IMR-90 (cell line): ENCODE measurements at regions of chr9 and their contacts with region 1.

Region 1: GRCh38 chr9:130042833-130043653 is at the start of gene FNBP1:
- DNase-seq: peak; percentile 75
- ATAC-seq: peak; percentile 91
- H3K4me3 ChIP-seq: peak within 1 kb of the TSS; percentile 68
- H3K27ac ChIP-seq: peak within 1 kb of the TSS; percentile 83
- H3K4me1 ChIP-seq: no peaks in the 10 kb centered on the region
- H3K27me3 ChIP-seq: no peaks in the 10 kb centered on the region
- CTCF ChIP-seq: no peak
- POLR2A ChIP-seq: peak; percentile 65; the same call in 1 of the 2 replicates
- RAD21 ChIP-seq: no peak
- total RNA-seq, gene FNBP1: 15.4 and 21.4 TPM in 2 replicates

Region 2: GRCh38 chr9:129835021-129835871 is 207.8 kb before region 1 on chr9 and contains the starts of genes C9orf78 and USP20:
- CTCF ChIA-PET with region 1: no interaction called
- POLR2A ChIA-PET with region 1: no interaction called
- dilution Hi-C with region 1: no loop called
- in situ Hi-C with region 1: no loop called
- intact Hi-C with region 1: loop called (anchors 2 kb)
- DNase-seq: peak; percentile 91
- ATAC-seq: peak; percentile 96
- H3K4me3 ChIP-seq: peak within 1 kb of the TSS; percentile 94
- H3K27ac ChIP-seq: peak within 1 kb of the TSS; percentile 79
- H3K4me1 ChIP-seq: peaks cover 13% of the 10 kb centered on the region
- H3K27me3 ChIP-seq: no peaks in the 10 kb centered on the region
- CTCF ChIP-seq: no peak
- POLR2A ChIP-seq: peak; percentile 95
- RAD21 ChIP-seq: no peak
- total RNA-seq, gene C9orf78: 29.8 and 57.5 TPM in 2 replicates
- total RNA-seq, gene USP20: 3.8 and 4.4 TPM in 2 replicates

Region 3: DNA sequence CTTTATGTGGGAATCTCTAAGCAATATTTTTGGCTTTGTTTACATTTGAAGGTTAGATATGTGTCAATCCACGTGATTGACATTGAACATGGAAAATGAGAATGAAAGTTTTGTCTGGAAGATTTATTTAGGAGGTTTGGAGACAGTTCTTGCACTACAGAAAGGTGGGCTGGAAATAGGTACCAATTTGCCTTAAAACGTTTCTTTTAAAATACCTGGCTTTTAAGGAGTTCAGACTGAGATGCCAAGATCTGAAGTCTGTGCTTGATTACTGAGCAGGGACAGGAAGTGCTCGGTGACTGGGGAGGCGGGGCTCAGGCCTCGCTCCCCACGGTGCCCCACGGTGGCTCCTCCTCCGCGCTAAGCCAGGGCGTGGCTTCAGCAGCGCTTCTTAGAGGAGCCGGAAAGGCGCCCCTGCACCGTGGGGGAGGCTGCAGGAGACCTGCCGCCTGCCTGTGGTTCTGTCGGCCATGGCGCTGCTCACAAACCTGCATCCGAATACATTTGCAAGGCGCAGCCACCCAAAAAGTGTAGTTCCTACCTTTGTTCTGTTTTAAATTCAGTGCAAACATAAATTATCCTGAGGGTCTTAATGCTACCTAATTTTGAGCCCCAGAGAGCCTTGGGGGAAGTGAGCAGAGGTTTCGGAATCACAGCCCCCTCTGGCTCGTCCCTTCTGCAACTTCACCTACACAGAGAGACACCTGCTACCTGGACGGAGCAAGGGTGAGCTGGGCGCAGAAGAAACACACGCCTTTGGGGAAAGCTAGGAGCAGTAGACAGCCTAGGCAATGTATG is 158.6 kb before region 1 on chr9:
- CTCF ChIA-PET with region 1: no interaction called
- POLR2A ChIA-PET with region 1: interaction called, 6 read pairs
- dilution Hi-C with region 1: no loop called
- in situ Hi-C with region 1: no loop called
- intact Hi-C with region 1: loop called (anchors 1 kb)
- DNase-seq: peak; percentile 71
- ATAC-seq: peak; percentile 79
- H3K4me3 ChIP-seq: no peak overlapping the region
- H3K27ac ChIP-seq: no peak overlapping the region
- H3K4me1 ChIP-seq: peaks cover 28% of the 10 kb centered on the region
- H3K27me3 ChIP-seq: no peaks in the 10 kb centered on the region
- CTCF ChIP-seq: no peak
- POLR2A ChIP-seq: no peak
- RAD21 ChIP-seq: no peak

Region 4: DNA sequence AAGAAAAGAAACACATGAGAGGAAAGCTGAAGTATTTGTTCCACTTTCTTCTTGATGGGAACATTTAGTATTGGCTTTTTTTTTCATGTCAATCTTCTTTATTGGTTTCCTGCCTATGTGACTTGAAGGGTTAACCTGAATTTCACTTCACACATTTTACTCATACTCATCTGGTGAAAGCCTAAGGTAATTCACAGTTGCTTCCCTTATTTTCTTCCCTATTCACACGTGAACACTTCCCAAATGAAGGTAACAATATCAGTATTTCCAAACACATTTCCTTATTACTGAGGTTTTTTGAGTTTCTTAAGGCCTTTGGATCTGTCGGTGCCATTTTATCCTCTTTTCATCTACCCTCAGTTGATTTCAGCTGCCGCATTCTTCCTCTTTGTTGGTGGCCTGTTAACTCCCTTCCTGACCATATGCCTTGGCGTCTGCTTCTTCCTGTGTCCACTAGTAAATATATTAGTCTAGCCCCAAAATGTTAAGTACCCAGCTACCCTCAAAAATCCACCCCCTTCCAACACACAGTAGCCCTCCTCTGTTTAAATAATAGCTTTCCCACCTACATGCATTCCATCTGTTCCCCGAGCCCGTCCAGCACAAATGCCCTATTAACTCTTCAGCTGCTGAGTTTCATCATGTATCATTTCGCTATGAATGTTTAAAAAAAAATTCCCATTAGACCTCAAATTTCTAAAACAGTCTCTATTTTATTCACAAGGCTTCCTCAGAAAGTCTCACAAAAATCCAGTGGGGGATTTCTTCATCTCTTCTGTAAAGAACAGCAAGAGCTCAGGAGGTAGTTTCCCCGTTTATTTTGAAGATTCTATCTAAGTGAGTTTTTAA is 110.5 kb before region 1 on chr9:
- CTCF ChIA-PET with region 1: no interaction called
- POLR2A ChIA-PET with region 1: no interaction called
- dilution Hi-C with region 1: no loop called
- in situ Hi-C with region 1: no loop called
- intact Hi-C with region 1: loop called (anchors 5 kb)
- DNase-seq: peak; percentile 10
- ATAC-seq: peak; percentile 56
- H3K4me3 ChIP-seq: no peak overlapping the region
- H3K27ac ChIP-seq: peak overlapping the region; percentile 3; the same call in 1 of the 2 replicates
- H3K4me1 ChIP-seq: peaks cover 19% of the 10 kb centered on the region
- H3K27me3 ChIP-seq: no peaks in the 10 kb centered on the region
- CTCF ChIP-seq: no peak
- POLR2A ChIP-seq: no peak
- RAD21 ChIP-seq: no peak

Region 5: GRCh38 chr9:129962889-129963703 is 79.9 kb before region 1 on chr9:
- CTCF ChIA-PET with region 1: no interaction called
- POLR2A ChIA-PET with region 1: no interaction called
- dilution Hi-C with region 1: no loop called
- in situ Hi-C with region 1: loop called (anchors 5 kb)
- intact Hi-C with region 1: loop called (anchors 2 kb)
- DNase-seq: peak; percentile 49
- ATAC-seq: peak; percentile 57
- H3K4me3 ChIP-seq: peak overlapping the region; percentile 52
- H3K27ac ChIP-seq: peak overlapping the region; percentile 84
- H3K4me1 ChIP-seq: peaks cover 23% of the 10 kb centered on the region
- H3K27me3 ChIP-seq: no peaks in the 10 kb centered on the region
- CTCF ChIP-seq: no peak
- POLR2A ChIP-seq: no peak
- RAD21 ChIP-seq: no peak

Region 6: DNA sequence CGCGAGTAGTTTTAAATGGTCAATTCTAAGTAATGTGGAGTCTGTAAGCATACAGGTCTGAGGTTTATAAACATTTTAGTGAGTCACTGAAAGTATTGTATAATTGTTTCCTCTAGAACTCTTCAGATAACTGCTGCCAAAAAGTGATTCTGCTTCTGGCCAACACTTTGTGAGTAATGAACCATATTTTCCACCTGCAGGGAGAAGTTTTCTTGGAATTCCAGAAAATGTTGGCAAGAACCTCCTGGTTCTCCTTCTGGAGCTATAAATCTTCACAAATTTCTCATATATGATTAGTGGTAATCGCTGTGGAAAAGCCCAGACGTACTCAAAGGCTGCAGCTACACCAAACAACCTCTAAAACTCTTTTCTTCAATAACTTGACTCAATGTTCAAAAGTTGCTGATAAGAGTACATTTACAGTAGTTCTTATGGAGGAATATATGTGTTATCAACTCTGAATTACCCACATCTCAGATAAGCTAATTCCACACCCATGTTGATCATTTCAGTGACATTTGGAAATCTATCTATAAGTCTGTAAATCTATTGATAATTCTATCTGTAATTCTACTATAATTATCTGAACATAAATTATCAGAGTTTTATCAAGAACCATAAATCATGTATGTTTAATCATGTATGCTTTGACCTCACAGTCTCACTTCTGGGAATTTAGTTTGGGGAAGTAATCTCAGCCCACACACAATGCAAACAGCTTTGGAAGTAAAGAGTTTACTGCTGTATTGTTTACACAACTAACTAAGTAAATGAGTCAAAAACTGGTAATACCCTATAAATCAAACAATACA is 74.1 kb before region 1 on chr9:
- CTCF ChIA-PET with region 1: no interaction called
- POLR2A ChIA-PET with region 1: no interaction called
- dilution Hi-C with region 1: no loop called
- in situ Hi-C with region 1: loop called (anchors 5 kb)
- intact Hi-C with region 1: loop called (anchors 2 kb)
- DNase-seq: peak; percentile 93
- ATAC-seq: peak; percentile 69
- H3K4me3 ChIP-seq: no peak overlapping the region
- H3K27ac ChIP-seq: no peak overlapping the region
- H3K4me1 ChIP-seq: peaks cover 20% of the 10 kb centered on the region
- H3K27me3 ChIP-seq: no peaks in the 10 kb centered on the region
- CTCF ChIP-seq: no peak
- POLR2A ChIP-seq: no peak
- RAD21 ChIP-seq: no peak

Region 7: DNA sequence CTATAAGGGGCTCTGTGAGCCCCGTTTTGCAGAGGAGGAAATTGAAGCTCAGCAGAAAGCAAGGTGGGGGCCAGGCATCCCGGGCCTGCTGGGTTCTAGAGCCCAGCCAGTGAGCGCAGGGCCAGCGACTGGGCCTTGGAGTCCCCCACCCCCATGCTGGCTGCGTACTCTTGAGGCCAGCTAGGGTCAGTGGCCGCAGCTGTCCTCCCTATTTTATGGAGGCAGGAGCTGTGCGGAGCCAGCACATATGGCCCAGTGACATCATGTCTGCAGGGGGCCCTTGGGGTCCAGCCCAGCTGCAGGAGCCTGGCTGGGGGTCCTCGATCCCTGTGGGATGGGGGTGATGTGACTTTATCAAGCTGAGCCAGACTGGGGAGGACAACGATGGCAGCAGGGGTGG is 293.8 kb after region 1 on chr9:
- CTCF ChIA-PET with region 1: no interaction called
- POLR2A ChIA-PET with region 1: interaction called, 19 read pairs
- dilution Hi-C with region 1: no loop called
- in situ Hi-C with region 1: no loop called
- intact Hi-C with region 1: no loop called
- DNase-seq: no peak
- ATAC-seq: no peak
- H3K4me3 ChIP-seq: no peak overlapping the region
- H3K27ac ChIP-seq: no peak overlapping the region
- H3K4me1 ChIP-seq: peaks cover 5% of the 10 kb centered on the region; the same call in 1 of the 2 replicates
- H3K27me3 ChIP-seq: peaks cover 28% of the 10 kb centered on the region
- CTCF ChIP-seq: no peak
- POLR2A ChIP-seq: no peak
- RAD21 ChIP-seq: no peak